OCI-LY7 (cell line): ENCODE measurements at regions of chr12 and their contacts with region 1.

Region 1: DNA sequence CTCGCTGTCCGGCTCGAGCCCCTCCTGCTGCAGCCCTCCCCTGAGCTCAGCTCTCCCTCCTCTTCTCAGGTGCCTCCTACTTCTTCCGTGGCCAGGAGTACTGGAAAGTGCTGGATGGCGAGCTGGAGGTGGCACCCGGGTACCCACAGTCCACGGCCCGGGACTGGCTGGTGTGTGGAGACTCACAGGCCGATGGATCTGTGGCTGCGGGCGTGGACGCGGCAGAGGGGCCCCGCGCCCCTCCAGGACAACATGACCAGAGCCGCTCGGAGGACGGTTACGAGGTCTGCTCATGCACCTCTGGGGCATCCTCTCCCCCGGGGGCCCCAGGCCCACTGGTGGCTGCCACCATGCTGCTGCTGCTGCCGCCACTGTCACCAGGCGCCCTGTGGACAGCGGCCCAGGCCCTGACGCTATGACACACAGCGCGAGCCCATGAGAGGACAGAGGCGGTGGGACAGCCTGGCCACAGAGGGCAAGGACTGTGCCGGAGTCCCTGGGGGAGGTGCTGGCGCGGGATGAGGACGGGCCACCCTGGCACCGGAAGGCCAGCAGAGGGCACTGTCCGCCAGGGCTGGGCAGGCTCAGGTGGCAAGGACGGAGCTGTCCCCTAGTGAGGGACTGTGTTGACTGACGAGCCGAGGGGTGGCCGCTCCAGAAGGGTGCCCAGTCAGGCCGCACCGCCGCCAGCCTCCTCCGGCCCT is 22.8 kb downstream of the MMP17 start:
- DNase-seq: peak; percentile 23
- H3K4me3 ChIP-seq: no peak overlapping the region
- H3K27ac ChIP-seq: no peak overlapping the region
- H3K4me1 ChIP-seq: no peaks in the 10 kb centered on the region
- CTCF ChIP-seq: peak; percentile 41; the same call in 1 of the 2 replicates

Region 2: DNA sequence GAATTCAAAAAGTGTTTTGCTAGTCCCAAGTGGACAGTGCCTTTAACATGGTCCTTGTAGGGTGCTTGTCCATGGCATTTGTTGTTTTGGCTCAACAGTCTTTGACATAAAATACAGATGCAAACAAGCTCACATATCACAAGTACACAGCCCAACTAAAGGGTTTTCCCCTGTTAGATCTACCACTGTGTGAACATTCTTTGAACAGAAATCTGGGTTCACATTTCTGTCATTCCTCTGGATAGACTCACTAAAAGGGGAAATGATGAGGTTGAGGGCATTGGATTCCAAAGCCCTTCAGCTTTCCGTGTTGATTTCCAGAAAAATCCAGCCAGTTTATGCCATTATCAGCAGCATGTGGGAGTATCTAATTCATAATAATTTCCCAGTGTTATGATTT is 152.8 kb after region 1 on chr12:
- CTCF ChIA-PET with region 1: no interaction called
- POLR2A ChIA-PET with region 1: no interaction called
- intact Hi-C with region 1: loop called (anchors 5 kb)
- DNase-seq: no peak
- H3K4me3 ChIP-seq: no peak overlapping the region
- H3K27ac ChIP-seq: no peak overlapping the region
- H3K4me1 ChIP-seq: no peaks in the 10 kb centered on the region
- CTCF ChIP-seq: no peak